SK-N-SH (cell line): ENCODE measurements at regions of chr7 and their contacts with region 1.

Region 1: DNA sequence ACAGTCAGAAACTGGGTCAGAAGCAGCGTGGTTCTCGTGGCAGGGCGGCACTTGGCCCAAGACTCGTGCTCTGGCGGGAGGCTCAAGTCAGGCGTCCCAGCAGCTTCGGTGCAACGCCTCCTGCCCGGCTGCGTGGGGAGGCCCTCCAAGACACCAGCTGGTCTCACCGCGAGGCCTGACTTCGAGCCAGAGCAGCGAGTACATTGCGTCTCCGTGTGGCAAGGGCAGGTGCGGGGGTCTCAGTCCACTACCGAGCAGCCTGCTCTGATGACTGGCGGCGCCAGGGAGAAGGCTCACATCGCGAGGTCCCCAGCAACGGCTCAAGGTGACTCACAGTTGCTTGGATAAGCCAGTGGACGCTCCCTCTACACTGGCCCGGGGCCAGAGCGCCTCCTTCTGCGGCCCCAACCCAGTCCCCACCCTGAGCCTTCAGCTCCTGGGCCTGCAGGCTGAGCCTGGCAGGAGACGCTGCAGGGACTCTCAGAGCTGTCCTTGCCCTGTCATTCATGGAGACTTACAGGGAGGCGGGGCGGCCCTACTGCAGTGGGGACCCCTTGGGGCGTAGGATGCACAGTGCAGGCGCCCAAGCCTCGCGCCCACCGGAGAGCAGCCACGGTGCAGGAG is 41.9 kb upstream of the PRKAR1B start:
- DNase-seq: peak; percentile 78
- H3K4me3 ChIP-seq: peak overlapping the region; percentile 52 to 55
- H3K27ac ChIP-seq: peak overlapping the region; percentile 90 to 98
- H3K4me1 ChIP-seq: peaks cover 21 to 45% of the 10 kb centered on the region in 2 experiments
- H3K27me3 ChIP-seq: no peaks in the 10 kb centered on the region
- CTCF ChIP-seq: peak; percentile 39
- EP300 ChIP-seq: no peak
- RAD21 ChIP-seq: peak; percentile 11; the same call in 1 of the 2 replicates

Region 2: DNA sequence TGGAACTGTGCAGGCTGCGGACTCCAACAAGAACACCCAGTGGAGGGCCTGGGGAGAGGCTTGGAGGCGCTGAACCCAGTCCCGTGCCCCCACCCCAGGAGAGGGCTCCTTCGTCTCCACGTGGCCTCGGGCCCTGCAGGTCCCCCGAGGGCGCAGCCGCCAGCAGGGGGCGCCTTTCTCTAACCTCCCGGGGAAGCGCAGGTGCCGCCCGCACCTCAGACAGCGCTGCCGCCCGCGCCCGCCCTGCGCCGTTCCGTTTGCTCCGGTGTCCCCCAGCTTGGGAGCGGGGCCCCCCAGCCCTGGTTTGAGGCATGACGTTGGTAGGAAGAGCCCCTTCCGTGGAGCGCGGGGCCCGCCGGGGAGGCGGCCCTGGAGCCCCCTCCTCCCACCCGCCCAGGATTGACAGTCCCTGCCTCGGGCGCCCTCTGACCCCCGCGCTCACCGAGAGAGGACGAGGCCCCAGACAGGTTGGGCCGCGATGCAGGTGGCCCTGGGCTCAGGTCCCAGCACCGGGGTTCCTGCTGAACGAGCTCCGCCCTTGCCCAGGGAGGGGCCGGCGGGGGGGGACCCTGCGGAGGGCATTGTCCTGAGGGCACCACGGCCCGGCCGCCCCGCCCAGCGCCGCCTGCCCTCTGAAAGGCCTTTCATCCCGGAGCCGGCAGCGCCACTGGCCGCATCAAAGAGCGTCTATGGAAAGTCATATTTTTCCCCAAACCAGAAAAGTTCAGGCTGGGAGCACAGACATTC is 436.2 kb before region 1 on chr7:
- CTCF ChIA-PET with region 1: interaction called, 36 read pairs
- POLR2A ChIA-PET with region 1: interaction called, 3 read pairs
- DNase-seq: peak; percentile 97
- H3K4me3 ChIP-seq: peak overlapping the region; percentile 36 to 58
- H3K27ac ChIP-seq: no peak overlapping the region
- H3K4me1 ChIP-seq: peaks cover 0 to 3% of the 10 kb centered on the region in 2 experiments; a peak in 1 of 4 replicates
- H3K27me3 ChIP-seq: peaks cover 26% of the 10 kb centered on the region; the same call in 1 of the 2 replicates
- CTCF ChIP-seq: peak; percentile 82
- EP300 ChIP-seq: no peak
- RAD21 ChIP-seq: peak; percentile 69

Region 3: DNA sequence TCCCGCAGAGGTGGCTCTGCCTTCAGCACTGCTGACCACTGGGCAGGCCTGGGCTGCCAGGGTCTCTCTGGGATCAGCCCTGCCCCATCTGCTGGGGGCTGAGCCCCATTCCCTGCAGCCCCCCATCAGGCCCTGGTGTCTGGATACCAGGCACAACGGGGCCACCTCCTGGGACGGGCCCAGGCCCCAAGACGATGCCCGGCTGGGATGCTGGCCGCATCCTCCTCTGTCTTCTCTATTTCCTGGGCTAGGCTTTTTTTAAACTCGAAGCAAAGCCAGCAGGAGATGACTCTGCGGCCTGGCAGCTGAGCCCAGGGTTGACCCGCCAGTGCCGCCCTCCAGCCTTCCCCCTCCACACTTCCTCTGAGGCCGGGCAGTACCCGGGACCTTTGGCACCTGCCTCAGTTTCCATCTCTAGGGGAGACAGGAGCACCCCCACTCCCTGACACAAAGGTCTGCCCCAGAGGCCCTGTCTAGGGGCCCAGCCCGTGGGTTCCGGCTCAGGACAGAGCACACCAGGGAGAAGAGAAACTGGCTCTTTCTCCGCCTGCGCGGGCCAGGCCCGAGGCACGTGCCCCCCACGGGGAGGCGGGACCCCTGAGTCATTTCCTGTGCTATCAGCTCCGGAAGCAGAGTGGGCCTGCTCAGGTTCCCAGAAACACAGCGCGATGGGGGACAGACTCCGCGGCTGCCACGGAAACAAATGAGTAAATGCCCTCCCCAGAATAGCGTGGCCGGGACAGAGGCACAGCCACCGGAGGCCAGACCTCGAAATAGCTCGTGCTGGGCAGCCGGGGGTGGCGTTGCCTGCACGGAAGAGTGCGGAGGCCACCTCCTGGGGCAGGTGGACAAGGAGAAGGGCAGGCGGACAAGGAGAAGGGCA is 164.8 kb before region 1 on chr7:
- CTCF ChIA-PET with region 1: no interaction called
- POLR2A ChIA-PET with region 1: no interaction called
- DNase-seq: no peak
- H3K4me3 ChIP-seq: no peak overlapping the region
- H3K27ac ChIP-seq: peak overlapping the region; percentile 9 to 89; a peak in 3 of 4 replicates
- H3K4me1 ChIP-seq: peaks cover 0 to 23% of the 10 kb centered on the region in 2 experiments; a peak in 3 of 4 replicates
- H3K27me3 ChIP-seq: no peaks in the 10 kb centered on the region
- CTCF ChIP-seq: no peak
- EP300 ChIP-seq: peak in 1 of 2 experiments; percentile 68; a peak in 1 of 4 replicates
- RAD21 ChIP-seq: no peak

Region 4: GRCh38 chr7:726084-726853 is 42.7 kb before region 1 on chr7 and contains the start of gene DNAAF5:
- CTCF ChIA-PET with region 1: interaction called, 4 read pairs
- POLR2A ChIA-PET with region 1: interaction called, 25 read pairs
- DNase-seq: peak; percentile 98
- H3K4me3 ChIP-seq: peak within 1 kb of the TSS; percentile 73 to 83
- H3K27ac ChIP-seq: peak within 1 kb of the TSS; percentile 50 to 76
- H3K4me1 ChIP-seq: peaks cover 7 to 20% of the 10 kb centered on the region in 2 experiments; a peak in 3 of 4 replicates
- H3K27me3 ChIP-seq: no peaks in the 10 kb centered on the region
- CTCF ChIP-seq: no peak
- EP300 ChIP-seq: peak in 1 of 2 experiments; percentile 19; a peak in 1 of 4 replicates
- RAD21 ChIP-seq: no peak
- polyA plus RNA-seq, gene DNAAF5: 51.8 and 58.5 TPM in 2 replicates

Region 5: DNA sequence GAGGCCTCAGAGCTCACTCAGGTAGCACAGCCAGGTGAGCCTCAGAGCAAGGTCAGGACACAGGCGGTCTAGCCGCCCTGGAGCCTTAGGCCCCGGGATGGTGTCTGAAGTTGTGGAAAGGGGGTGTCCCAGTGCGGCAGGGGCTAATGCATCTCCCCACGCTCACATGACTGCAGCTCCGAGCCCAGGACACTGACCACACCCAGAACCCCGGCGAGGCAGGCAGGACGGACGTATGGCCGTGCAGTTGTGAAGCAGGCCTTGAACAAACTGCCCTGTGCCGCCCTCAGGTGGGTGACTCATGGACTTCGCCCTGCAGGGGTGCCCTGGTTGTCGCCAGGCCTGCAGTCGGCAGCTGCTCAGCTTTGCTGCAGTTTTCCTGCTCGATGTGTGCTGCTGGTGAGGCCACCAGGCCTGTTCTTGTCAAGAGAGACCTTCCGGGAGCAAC is 36.9 kb before region 1 on chr7:
- CTCF ChIA-PET with region 1: interaction called, 4 read pairs
- POLR2A ChIA-PET with region 1: interaction called, 25 read pairs
- DNase-seq: peak; percentile 71
- H3K4me3 ChIP-seq: no peak overlapping the region
- H3K27ac ChIP-seq: peak overlapping the region in 1 of 2 experiments; percentile 41; a peak in 2 of 4 replicates
- H3K4me1 ChIP-seq: peaks cover 0 to 15% of the 10 kb centered on the region in 2 experiments; a peak in 1 of 4 replicates
- H3K27me3 ChIP-seq: no peaks in the 10 kb centered on the region
- CTCF ChIP-seq: no peak
- EP300 ChIP-seq: no peak
- RAD21 ChIP-seq: peak; percentile 57

Region 6: GRCh38 chr7:749140-749551 is 19.8 kb before region 1 on chr7:
- CTCF ChIA-PET with region 1: interaction called, 4 read pairs
- POLR2A ChIA-PET with region 1: interaction called, 11 read pairs
- DNase-seq: peak; percentile 90
- H3K4me3 ChIP-seq: no peak overlapping the region
- H3K27ac ChIP-seq: peak overlapping the region in 1 of 2 experiments; percentile 68; a peak in 2 of 4 replicates
- H3K4me1 ChIP-seq: peaks cover 0 to 21% of the 10 kb centered on the region in 2 experiments; a peak in 2 of 4 replicates
- H3K27me3 ChIP-seq: no peaks in the 10 kb centered on the region
- CTCF ChIP-seq: no peak
- EP300 ChIP-seq: 0 out of 4 replicates have a peak, but pooled peaks of 1 of the 2 experiments have one; percentile 19
- RAD21 ChIP-seq: no peak

Region 7: DNA sequence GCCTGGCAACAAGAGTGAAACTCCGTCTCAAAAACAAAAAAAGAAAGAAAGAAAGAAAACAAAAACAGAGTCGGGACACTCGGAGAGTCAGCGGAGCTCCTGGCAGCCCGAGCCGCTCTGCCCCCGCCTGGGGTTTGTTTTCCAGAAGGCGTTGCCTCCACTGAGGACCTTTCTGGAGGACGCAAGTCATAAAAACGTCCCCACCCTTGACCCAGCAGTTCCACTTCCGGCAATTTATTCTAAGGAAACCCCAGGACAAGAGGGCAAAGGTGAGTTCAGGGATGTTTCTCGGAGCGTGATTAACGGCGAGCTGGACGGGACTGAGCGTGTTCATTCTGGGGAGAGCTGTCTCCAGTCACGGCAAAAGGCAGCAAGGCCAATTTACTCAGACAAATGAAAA is 36.3 kb after region 1 on chr7:
- CTCF ChIA-PET with region 1: no interaction called
- POLR2A ChIA-PET with region 1: no interaction called
- DNase-seq: no peak
- H3K4me3 ChIP-seq: no peak overlapping the region
- H3K27ac ChIP-seq: no peak overlapping the region
- H3K4me1 ChIP-seq: peaks cover 0 to 4% of the 10 kb centered on the region in 2 experiments; a peak in 1 of 4 replicates
- H3K27me3 ChIP-seq: no peaks in the 10 kb centered on the region
- CTCF ChIP-seq: no peak
- EP300 ChIP-seq: no peak
- RAD21 ChIP-seq: no peak

Region 8: DNA sequence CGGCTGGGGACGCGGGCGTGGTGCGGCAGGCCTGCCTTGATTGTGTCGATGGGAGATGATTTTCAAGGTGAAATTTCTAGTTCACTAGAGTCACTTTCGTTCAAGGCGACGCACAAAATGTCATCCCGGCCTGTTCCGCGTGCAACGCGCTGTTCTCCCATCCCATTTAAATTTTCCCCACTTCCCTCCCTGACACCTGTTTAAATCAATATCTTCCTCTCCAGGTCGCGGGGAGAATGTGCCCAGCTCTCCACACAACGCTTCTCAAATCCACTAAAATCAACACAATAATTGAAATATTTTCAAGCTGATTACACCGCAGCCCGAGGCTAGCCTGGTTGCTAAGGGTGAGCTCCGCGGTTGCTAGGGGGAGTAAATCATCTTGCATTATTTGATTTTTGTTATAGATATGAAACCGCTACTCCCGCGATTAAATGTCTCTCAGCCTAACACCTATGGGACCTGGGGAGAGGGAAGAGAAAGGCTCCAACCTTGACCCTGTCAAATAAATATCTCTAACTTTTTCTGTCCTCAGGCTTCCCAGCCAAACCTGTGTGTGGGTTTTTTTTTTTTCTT is 499.8 kb after region 1 on chr7:
- CTCF ChIA-PET with region 1: no interaction called
- POLR2A ChIA-PET with region 1: no interaction called
- DNase-seq: no peak
- H3K4me3 ChIP-seq: no peak overlapping the region
- H3K27ac ChIP-seq: no peak overlapping the region
- H3K4me1 ChIP-seq: no peaks in the 10 kb centered on the region
- H3K27me3 ChIP-seq: peaks cover 75% of the 10 kb centered on the region
- CTCF ChIP-seq: no peak
- EP300 ChIP-seq: no peak
- RAD21 ChIP-seq: no peak